ENCODE measurements at regions of chr12 and their contacts with region 1.

Region 1: GRCh38 chr12:52278541-52279421 is 4.3 kb downstream of the KRT86 start:
- DNase-seq: peak; percentile 90
- CTCF ChIP-seq: peak; percentile 96

Region 2: DNA sequence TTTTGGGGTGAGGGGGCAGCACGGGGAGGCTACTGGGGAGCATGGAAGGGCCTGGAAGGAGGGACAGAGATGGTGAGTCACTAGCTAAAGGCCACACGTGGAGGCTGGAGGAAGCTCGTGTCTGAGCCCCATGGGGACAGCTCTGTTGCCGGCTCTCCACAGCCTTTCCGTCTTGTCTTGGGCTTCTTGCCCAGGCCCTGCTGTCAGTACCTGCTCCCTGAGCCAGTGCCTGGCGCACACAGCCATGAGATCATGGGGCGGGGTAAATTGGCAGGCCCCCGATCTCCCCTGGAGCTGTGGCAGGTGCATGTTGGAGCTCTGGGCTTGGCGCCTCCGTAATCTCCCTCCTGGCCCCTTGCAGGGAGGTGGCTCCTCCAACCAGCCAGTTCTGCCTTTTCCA is 70.9 kb before region 1 on chr12:
- CTCF ChIA-PET with region 1: interaction called, 10 read pairs
- POLR2A ChIA-PET with region 1: no interaction called
- DNase-seq: no peak
- CTCF ChIP-seq: no peak

Region 3: DNA sequence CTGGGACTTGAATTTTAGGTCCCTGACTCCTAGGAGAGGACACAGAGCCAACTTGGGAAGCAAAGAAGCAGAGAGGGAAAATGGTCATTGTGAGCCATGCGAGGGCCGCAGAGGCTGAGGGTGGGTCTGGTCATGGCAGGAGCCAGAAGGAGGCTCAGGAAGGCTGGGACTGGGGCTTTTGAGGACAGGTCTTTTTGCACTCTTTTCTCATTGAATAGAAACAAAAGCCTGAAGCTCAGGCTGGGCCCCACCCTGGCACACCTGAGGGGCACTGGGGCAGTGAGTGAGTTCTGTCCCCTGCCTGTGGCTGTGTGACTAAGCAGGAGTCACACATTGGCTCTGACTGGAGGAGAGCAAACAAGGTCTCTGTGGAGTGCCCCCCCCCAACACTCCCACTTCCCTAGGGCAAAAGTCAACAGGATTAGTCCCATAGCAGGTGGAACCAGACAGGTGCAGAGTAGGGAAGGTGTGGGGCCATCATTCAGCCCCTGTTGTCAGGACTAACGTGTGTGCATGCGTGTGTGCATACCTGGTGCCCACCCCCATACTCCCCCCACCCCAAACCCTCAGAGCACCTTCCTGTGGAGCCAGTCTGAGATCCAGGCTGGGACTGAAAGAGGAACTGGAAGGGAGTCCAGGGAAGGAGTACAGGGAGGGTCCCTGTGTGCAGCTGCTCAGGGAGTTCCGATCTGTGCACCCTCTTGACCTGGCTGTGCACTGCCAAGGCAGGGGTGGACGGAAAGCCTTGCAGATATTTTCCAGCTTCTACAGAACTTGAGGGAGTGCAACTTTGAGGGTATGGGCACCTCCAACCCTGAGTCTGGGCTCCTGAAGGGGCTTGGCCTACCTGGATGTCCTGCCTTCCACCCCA is 42.7 kb before region 1 on chr12:
- CTCF ChIA-PET with region 1: interaction called, 29 read pairs
- POLR2A ChIA-PET with region 1: no interaction called
- DNase-seq: no peak
- CTCF ChIP-seq: no peak

Region 4: DNA sequence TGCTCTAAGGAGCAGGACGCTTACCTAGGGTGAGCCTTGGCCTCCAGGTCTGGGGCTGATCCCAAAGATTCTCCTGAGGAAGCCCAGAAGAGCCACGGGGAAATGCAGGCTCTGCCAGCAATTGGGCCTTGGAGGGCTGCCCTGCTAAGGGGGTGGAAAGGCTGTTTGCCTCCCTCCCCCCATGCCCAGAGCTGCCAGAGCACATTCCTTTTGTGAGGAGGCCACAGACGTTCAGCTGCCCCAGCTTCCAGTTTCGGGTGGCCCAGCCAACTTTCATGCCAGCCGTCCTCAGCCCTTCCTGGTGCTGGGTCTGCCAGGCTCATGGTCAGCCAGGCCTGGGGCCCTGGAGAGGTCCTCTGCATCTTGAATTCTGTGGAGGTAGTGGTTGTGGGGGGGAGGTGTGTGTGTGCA is 29.7 kb before region 1 on chr12:
- CTCF ChIA-PET with region 1: interaction called, 16 read pairs
- POLR2A ChIA-PET with region 1: no interaction called
- DNase-seq: no peak
- CTCF ChIP-seq: no peak

Region 5: GRCh38 chr12:52268212-52268611 is 10.6 kb before region 1 on chr12:
- CTCF ChIA-PET with region 1: interaction called, 89 read pairs
- POLR2A ChIA-PET with region 1: no interaction called
- DNase-seq: no peak
- CTCF ChIP-seq: no peak

Region 6: GRCh38 chr12:52307836-52308805 is 29.3 kb after region 1 on chr12:
- CTCF ChIA-PET with region 1: interaction called, 24 read pairs
- POLR2A ChIA-PET with region 1: no interaction called
- DNase-seq: no peak
- CTCF ChIP-seq: no peak